ENCODE measurements at regions of chr7 and their contacts with region 1.

Region 1: GRCh38 chr7:55019691-55020465 is 1.1 kb downstream of the EGFR start:
- DNase-seq: peak; percentile 54
- H3K4me3 ChIP-seq: peak overlapping the region; percentile 73
- H3K27ac ChIP-seq: peak overlapping the region; percentile 82
- H3K4me1 ChIP-seq: no peaks in the 10 kb centered on the region
- H3K27me3 ChIP-seq: no peaks in the 10 kb centered on the region
- CTCF ChIP-seq: no peak

Region 2: GRCh38 chr7:54811041-54811845 is 208.6 kb before region 1 on chr7:
- intact Hi-C with region 1: no loop called
- DNase-seq: no peak
- H3K4me3 ChIP-seq: no peak overlapping the region
- H3K27ac ChIP-seq: no peak overlapping the region
- H3K4me1 ChIP-seq: no peaks in the 10 kb centered on the region
- H3K27me3 ChIP-seq: no peaks in the 10 kb centered on the region
- CTCF ChIP-seq: no peak

Region 3: DNA sequence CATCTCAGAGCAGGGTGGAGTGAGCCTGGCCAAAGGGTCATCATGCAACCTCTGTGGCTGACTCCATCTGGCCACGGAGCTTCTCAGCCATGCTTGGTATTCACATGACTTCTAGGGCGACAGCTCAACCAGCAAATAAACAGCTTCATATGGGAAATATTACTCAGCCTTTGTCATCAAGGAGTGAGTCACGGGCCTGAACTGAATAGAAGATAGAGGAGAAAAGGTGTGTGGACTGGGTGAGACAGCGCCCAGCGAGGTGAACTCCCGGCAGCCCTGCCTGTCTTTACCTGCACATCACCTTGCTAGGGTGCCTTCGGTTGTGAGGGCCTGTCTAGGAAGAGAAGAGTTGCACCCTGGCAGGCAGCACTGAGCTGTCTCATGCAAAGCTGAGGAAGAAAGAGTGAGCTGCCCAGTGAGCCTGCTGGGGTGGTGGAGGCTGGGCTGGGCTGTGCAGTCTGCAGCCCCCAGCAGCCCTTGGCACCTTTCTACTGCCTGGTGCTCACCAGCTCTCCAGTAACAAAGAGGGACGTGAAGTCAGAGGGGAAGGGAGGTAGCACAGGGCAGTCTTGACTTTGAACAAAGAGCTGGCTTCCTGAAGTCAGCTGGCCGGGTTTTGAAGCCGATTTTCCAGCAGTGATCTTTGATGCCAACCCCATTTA is 113.1 kb after region 1 on chr7:
- intact Hi-C with region 1: loop called (anchors 10 kb)
- DNase-seq: no peak
- H3K4me3 ChIP-seq: no peak overlapping the region
- H3K27ac ChIP-seq: peak overlapping the region; percentile 53
- H3K4me1 ChIP-seq: peaks cover 13% of the 10 kb centered on the region
- H3K27me3 ChIP-seq: no peaks in the 10 kb centered on the region
- CTCF ChIP-seq: no peak